ENCODE measurements at regions of chr1 and their contacts with region 1.

Region 1: GRCh38 chr1:152034646-152035405 is 2.0 kb downstream of the S100A11 start:
- DNase-seq: no peak
- H3K4me3 ChIP-seq: peak overlapping the region; percentile 82
- CTCF ChIP-seq: peak; percentile 58

Region 2: GRCh38 chr1:152024158-152024557 is 10.7 kb before region 1 on chr1:
- CTCF ChIA-PET with region 1: interaction called, 25 read pairs
- POLR2A ChIA-PET with region 1: no interaction called
- DNase-seq: no peak
- H3K4me3 ChIP-seq: no peak overlapping the region
- CTCF ChIP-seq: no peak

Measured in AG04449 (cell line).